Psoas muscle (tissue), 8 donors: ENCODE measurements at regions of chr1 and their contacts with region 1.

Region 1: GRCh38 chr1:246769306-246769705 is 45.1 kb downstream of the SCCPDH start:
- DNase-seq: peak; percentile 76 to 88
- ATAC-seq: peak; percentile 94 to 97 (median 96)
- H3K4me3 ChIP-seq: no peak overlapping the region
- H3K27ac ChIP-seq: peak overlapping the region; percentile 79
- H3K4me1 ChIP-seq: no peaks in the 10 kb centered on the region
- H3K27me3 ChIP-seq: no peaks in the 10 kb centered on the region
- CTCF ChIP-seq: no peak

Region 2: DNA sequence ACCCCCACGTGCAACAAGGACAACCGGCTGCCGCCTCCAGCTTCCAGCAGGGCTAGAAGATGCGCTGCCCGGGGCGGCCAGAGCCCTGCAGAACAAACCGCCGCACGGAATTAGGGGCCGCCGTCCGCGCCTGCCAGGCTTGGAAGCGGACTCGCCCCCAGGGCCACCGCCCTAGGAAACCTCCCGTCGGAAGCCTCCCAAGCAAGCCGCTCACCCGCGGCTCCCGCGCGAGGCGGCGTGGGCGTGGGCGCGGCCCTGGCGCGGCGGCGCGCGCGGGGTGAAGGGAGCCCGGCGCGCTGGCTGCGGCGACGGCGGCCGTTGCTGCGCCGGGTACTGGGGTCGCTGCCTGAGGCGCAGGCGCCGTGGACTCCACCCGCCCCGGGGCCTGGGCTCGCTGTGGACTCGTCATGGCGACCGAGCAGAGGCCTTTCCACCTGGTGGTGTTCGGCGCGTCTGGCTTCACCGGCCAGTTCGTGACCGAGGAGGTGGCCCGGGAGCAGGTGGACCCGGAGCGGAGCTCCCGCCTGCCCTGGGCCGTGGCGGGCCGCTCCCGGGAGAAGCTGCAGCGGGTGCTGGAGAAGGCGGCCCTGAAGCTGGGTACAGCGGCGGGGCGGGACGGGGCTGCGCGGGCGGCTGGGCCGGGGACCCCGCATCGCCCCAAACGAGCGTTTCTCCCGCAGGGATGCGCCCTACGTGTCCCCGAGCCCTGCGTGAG is 45.1 kb before region 1 on chr1 and contains the start of gene SCCPDH:
- intact Hi-C with region 1: no loop called
- DNase-seq: peak; percentile 81 to 88
- ATAC-seq: peak; percentile 95 to 98 (median 97)
- H3K4me3 ChIP-seq: peak within 1 kb of the TSS; percentile 99
- H3K27ac ChIP-seq: peak within 1 kb of the TSS; percentile 90
- H3K4me1 ChIP-seq: no peaks in the 10 kb centered on the region
- H3K27me3 ChIP-seq: no peaks in the 10 kb centered on the region
- CTCF ChIP-seq: no peak
- total RNA-seq, gene SCCPDH: 22.6 to 41.8 (median 38.5) TPM

Region 3: DNA sequence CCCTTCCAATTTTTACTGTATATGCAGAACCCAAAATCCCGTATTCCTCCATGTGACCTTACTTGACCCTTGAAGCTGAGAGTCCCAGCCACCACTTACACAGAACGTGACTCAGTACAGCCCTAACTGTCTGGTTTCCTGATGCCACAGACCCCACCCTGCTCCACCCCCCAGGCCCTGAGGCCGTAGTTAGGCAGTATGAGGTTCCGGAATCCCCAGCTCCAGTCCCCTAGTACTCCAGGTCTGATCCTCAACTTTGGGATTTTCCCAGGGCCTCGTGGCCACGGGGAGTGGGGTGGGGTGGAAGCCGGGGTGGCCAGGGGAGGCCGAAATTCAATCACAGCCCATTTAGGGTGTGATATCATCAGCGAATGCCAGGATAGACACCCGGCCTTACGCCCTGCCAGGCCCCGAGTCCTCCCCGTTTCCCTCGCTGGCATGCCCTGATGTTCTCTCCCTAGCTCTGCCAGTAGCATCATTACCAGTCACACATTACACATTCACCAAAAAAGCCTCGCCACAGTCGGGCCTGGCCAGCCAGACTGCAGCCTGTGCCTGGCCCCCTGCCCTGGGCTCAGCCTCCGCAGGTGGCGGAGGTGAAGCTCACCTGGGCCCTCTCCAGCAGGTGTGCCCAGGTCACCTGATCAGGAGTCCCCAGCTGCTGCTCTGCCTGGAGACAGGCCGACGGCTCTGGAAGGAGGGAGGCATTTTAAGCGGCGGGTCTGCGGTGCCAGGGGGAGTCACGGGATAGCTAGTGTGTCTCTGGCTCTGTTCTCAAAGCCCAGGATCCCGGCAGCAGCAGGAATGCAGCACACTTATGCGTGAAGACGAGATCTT is 25.7 kb after region 1 on chr1:
- intact Hi-C with region 1: loop called in 1 of 2 experiments (anchors 1 kb)
- DNase-seq: no peak
- ATAC-seq: peak; percentile 20 to 68 (median 45)
- H3K4me3 ChIP-seq: no peak overlapping the region
- H3K27ac ChIP-seq: peak overlapping the region; percentile 43
- H3K4me1 ChIP-seq: peaks cover 23% of the 10 kb centered on the region
- H3K27me3 ChIP-seq: no peaks in the 10 kb centered on the region
- CTCF ChIP-seq: no peak

Region 4: GRCh38 chr1:246875041-246876026 is 106.0 kb after region 1 on chr1:
- intact Hi-C with region 1: loop called in 1 of 2 experiments (anchors 10 kb)
- DNase-seq: no peak
- ATAC-seq: peak; percentile 30 to 73 (median 56)
- H3K4me3 ChIP-seq: no peak overlapping the region
- H3K27ac ChIP-seq: no peak overlapping the region
- H3K4me1 ChIP-seq: peaks cover 7% of the 10 kb centered on the region
- H3K27me3 ChIP-seq: no peaks in the 10 kb centered on the region
- CTCF ChIP-seq: no peak